Sigmoid colon (tissue), 7 donors: ENCODE measurements at regions of chr9 and their contacts with region 1.

Region 1: GRCh38 chr9:129460323-129461261 is 160.3 kb downstream of the C9orf50 start:
- DNase-seq: peak; percentile 99
- H3K4me3 ChIP-seq: peak overlapping the region; percentile 19 to 46 (median 46)
- H3K27ac ChIP-seq: peak overlapping the region; percentile 95 to 100 (median 98)
- H3K4me1 ChIP-seq: peaks cover 0 to 68% (median 54%) of the 10 kb centered on the region in 4 donors
- H3K27me3 ChIP-seq: no peaks in the 10 kb centered on the region
- CTCF ChIP-seq: peak in 1 of 4 experiments; percentile 23
- EP300 ChIP-seq: peak in 2 of 4 donors; percentile 53 to 72
- POLR2A ChIP-seq: peak in 1 of 2 donors; percentile 42

Region 2: DNA sequence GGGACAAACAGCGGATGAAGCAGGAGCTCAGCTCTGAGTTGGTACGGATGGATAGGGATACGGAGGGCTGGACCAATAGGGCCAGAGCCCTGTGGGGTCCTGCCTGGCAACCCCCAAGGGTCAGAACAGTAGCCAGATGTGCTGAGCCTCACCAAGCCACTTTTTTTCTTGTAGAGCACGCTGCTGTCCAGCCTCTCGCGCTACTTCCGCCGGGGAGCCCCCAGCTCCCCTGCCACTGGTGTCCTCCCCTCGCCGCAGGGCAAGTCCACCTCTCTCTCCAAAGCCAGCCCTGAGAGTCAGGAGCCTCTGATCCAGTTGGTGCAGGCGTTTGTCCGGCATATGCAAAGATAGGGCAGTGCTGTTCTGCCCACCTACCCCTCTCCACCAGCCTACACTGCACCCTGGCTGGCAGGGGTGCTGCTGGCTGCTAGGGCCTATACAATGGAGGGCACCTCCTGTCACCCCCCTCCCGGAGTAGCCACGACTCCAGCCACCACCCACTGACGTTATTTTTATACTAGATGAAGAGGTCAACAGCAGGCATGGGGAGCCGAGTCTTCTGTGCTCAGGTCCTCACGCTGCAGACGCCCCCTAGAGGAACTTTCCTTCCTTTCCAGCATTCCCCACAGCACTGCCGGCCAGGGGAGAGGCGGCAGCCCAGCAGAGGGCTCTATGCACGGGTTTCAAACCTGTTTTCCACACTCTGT is 454.1 kb before region 1 on chr9:
- intact Hi-C with region 1: no loop called
- DNase-seq: peak; percentile 88
- H3K4me3 ChIP-seq: no peak overlapping the region
- H3K27ac ChIP-seq: peak overlapping the region; percentile 32 to 72 (median 55)
- H3K4me1 ChIP-seq: peaks cover 0 to 19% (median 13%) of the 10 kb centered on the region in 4 donors
- H3K27me3 ChIP-seq: no peaks in the 10 kb centered on the region
- CTCF ChIP-seq: peak; percentile 17 to 79 (median 62)
- EP300 ChIP-seq: no peak
- POLR2A ChIP-seq: no peak

Region 3: DNA sequence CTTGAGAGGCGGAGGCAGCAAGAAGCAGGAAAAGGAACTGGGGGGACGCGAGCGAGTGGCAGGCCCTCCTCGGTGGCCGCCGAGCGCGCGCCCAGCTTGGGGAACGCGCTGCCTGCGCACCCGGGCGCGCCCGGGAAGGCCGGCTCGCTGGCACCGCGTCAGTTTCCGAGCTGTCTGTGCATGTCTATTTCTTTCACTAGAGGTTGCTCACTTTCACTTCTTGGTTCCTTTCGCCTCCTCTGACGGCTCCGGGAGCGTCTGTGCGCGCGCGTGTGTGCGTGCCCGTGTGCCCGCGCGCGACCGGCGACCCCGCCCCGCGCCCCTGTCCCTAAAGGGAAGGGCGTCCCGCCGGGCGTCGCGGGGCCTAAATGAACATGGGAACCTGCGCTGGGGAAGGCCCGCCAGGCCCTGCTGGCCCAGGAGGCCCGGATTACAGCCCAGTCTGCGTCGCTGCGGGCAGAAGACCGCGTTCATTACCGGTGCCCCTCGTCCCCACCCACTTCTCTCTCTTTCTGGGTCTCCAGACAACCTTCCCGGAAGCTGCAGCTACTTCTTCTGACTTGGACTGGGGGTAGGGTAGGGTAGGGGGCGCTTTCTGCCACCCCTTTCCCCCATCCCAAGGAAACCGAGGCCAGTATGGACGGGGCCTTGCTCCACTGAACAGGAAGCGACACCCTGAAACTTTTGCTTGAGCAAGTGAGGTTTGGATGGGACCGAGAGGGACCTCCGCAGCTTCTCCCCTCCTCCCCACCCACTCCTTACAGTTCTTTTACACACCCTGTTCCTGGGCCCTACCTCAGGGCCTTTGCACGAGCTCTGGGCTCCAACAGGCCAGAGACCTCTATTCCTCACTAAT is 76.8 kb before region 1 on chr9:
- intact Hi-C with region 1: loop called (anchors 5 kb)
- DNase-seq: peak; percentile 92
- H3K4me3 ChIP-seq: peak overlapping the region; percentile 42 to 71 (median 57)
- H3K27ac ChIP-seq: peak overlapping the region; percentile 87 to 93 (median 88)
- H3K4me1 ChIP-seq: peaks cover 0 to 22% (median 18%) of the 10 kb centered on the region in 4 donors
- H3K27me3 ChIP-seq: no peaks in the 10 kb centered on the region
- CTCF ChIP-seq: peak in 1 of 4 experiments; percentile 13
- EP300 ChIP-seq: no peak
- POLR2A ChIP-seq: no peak

Region 4: DNA sequence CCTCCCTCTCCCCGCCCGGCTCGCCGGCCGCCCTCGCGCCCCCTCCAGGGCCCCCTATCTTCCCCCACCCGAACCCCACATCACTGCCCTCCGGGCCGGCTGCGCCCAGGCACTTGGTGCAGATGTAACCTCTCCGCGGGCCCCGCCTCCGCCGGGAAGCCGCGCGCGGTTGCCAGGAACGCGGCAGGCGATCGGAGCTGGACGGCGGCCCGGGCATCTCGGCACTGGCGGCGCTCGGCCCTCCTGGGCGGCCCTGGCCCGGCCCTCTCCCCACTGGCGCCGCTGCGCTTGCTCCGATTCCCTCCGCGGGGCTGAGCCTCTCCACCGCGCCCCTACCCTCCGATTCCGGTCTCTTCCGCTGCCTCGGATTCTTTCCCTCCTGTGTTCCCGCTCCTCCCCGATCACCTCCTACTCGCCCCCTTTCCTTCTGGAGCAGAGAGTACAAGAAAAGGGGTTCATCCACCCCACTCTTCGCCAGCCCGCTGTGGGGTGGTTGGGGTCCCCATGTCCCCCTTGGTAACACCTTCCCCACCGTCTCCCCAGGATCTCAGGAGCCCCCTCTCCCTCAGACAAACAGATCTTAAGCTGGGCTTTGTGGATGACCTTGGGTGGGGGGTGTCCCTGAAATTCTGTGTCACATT is 89.7 kb after region 1 on chr9:
- intact Hi-C with region 1: loop called (anchors 5 kb)
- DNase-seq: peak; percentile 93
- H3K4me3 ChIP-seq: peak overlapping the region; percentile 41 to 71 (median 56)
- H3K27ac ChIP-seq: peak overlapping the region; percentile 73 to 86 (median 78)
- H3K4me1 ChIP-seq: peaks cover 0 to 16% (median 13%) of the 10 kb centered on the region in 4 donors
- H3K27me3 ChIP-seq: no peaks in the 10 kb centered on the region
- CTCF ChIP-seq: no peak
- EP300 ChIP-seq: no peak
- POLR2A ChIP-seq: no peak